Activated CD4-positive, alpha-beta T cell treated with anti-CD3 and anti-CD28 coated beads for 36 hours (primary cell): ENCODE measurements at regions of chr15 and their contacts with region 1.

Region 1: GRCh38 chr15:90184786-90185569 is 16.2 kb upstream of the SEMA4B start:
- DNase-seq: peak; percentile 78
- ATAC-seq: peak; percentile 81
- H3K4me3 Mint-ChIP-seq: peak overlapping the region; percentile 77
- H3K27ac Mint-ChIP-seq: peak overlapping the region; percentile 64
- H3K4me1 Mint-ChIP-seq: peaks cover 12% of the 10 kb centered on the region
- H3K27me3 Mint-ChIP-seq: no peaks in the 10 kb centered on the region

Region 2: DNA sequence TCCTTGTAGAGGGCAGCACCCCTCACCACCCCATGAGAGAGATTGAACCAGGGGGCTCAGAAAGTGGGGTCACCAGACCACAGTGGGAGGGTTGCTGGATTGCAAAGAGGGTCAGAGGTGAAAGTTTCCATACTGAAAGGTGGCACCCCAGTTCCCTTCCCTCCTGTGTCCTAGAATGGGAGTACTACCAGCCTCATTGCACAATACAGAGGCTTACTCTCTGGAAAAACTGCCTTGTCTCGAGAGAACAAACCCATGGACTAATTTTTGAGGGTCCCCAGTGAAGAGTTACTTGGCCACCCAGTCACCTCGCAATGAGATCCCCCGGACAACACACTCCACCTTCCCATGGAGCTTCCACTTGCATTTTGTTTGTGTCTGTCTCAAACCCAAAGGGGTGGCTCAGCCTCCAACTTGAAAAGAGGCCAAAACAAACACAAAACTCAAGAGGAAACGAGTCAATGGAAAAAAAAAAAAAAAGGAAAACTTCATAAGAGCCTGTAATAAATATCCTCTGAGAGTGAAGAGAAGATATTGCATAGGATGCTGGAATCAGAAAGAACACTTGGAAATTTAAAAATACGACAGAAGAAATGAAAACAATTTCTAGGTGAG is 390.2 kb before region 1 on chr15:
- CTCF ChIA-PET with region 1: no interaction called
- POLR2A ChIA-PET with region 1: no interaction called
- intact Hi-C with region 1: no loop called
- DNase-seq: no peak
- ATAC-seq: no peak
- H3K4me3 Mint-ChIP-seq: no peak overlapping the region
- H3K27ac Mint-ChIP-seq: no peak overlapping the region
- H3K4me1 Mint-ChIP-seq: no peaks in the 10 kb centered on the region
- H3K27me3 Mint-ChIP-seq: peaks cover 2% of the 10 kb centered on the region

Region 3: DNA sequence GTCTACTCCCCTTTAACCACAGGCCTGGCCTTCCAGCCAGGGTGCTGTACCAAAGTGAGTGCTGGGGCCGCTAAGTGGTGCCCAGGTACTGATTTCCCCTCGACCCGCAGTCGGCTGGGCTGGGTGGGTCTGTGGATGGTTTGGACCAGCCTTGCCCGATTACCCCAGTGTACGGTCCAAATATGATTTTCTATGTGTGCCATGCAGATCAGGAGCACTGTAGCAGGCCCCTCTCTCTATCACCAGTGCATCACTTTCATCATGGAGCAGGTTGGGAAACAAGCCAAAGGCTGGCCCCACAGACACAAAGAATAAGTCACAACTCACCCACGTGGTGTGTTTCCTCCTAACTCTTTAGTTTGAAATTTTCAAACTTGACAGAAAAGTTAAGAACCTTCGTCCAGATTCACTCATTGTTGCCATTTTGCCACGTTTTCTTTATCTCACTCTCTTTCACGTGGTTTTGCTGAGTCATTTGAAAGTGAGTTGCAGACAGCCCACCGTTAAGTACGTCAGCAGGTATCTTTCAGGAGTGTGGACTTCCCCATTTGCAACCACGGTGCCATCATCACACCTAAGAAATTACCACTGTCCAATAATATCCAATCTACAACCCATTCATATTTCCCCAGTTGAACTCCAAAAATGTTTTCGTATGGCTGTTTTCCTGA is 146.9 kb before region 1 on chr15:
- CTCF ChIA-PET with region 1: no interaction called
- POLR2A ChIA-PET with region 1: no interaction called
- intact Hi-C with region 1: no loop called
- DNase-seq: peak; percentile 82
- ATAC-seq: peak; percentile 82
- H3K4me3 Mint-ChIP-seq: peak overlapping the region; percentile 6
- H3K27ac Mint-ChIP-seq: peak overlapping the region; percentile 95
- H3K4me1 Mint-ChIP-seq: peaks cover 79% of the 10 kb centered on the region
- H3K27me3 Mint-ChIP-seq: no peaks in the 10 kb centered on the region

Region 4: DNA sequence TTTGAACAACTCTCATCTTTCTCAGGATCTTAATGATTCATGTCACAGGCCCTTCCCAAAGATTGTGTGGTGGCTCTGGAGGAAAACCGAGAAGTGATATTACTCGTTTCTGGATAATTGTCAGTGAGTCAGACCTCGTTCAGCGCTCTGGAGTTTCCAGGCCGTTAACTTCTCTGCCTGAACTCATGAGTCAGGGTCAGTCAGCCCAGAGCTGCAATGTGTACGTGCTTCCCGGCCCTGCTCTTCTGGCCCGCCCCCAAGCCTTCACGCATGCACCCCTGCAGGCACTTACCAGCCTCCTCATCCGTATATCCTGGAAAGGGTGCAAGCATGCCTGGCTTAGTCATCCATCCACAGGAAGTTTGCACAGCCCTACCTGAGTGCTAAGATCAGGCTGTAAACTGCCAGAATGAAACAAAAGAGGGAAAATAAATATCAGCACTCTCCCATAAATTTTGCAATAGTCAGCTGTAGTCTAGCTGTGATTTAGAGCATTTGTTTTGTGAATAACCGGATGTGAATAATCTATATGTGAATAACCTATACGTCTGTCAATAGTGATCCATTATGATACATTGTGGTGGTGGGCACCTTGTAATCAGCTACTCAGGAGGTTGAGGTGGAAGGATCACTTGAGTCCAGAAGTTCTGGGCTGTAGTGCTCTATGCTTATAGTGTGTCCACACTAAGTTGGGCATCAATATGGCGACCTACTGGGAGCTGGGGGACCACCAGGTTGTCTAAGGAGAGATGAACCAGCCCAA is 19.1 kb before region 1 on chr15:
- CTCF ChIA-PET with region 1: interaction called, 3 read pairs
- POLR2A ChIA-PET with region 1: interaction called, 3 read pairs
- intact Hi-C with region 1: loop called in 1 of 2 experiments (anchors 1 kb)
- DNase-seq: peak; percentile 81
- ATAC-seq: peak; percentile 97
- H3K4me3 Mint-ChIP-seq: no peak overlapping the region
- H3K27ac Mint-ChIP-seq: peak overlapping the region; percentile 74
- H3K4me1 Mint-ChIP-seq: peaks cover 18% of the 10 kb centered on the region
- H3K27me3 Mint-ChIP-seq: peaks cover 6% of the 10 kb centered on the region